AG04449 (cell line): ENCODE measurements at regions of chr1 and their contacts with region 1.

Region 1: GRCh38 chr1:145858894-145859490 is at the start of gene PIAS3:
- DNase-seq: peak; percentile 64
- H3K4me3 ChIP-seq: peak within 1 kb of the TSS; percentile 92
- CTCF ChIP-seq: no peak

Region 2: DNA sequence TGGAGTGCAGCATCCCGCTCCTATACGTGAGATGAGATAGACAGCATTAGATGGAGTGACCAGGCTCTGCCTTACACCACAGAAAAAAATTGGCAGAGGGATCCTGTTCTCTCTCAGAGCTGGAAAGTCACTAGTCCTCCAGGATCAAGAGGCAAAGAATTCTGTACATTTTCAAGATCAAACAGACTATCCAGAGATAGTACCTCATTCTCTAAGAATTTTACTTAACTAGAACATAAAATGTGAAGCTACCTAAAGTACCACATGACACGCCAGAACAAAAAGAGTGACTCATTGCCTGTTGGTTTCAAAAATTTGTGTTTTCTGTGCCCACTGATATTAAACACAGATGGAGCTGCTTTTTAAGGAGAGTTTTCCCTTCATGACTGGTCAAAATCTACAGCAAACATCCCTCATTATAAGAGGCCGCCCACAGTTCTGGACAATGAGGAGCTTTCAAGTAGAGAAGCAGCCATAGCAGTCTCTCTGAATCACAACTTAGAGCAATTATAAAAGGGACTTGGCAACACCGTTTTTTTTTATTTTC is 107.4 kb before region 1 on chr1:
- CTCF ChIA-PET with region 1: no interaction called
- POLR2A ChIA-PET with region 1: no interaction called
- DNase-seq: peak; percentile 84
- H3K4me3 ChIP-seq: no peak overlapping the region
- CTCF ChIP-seq: no peak

Region 3: DNA sequence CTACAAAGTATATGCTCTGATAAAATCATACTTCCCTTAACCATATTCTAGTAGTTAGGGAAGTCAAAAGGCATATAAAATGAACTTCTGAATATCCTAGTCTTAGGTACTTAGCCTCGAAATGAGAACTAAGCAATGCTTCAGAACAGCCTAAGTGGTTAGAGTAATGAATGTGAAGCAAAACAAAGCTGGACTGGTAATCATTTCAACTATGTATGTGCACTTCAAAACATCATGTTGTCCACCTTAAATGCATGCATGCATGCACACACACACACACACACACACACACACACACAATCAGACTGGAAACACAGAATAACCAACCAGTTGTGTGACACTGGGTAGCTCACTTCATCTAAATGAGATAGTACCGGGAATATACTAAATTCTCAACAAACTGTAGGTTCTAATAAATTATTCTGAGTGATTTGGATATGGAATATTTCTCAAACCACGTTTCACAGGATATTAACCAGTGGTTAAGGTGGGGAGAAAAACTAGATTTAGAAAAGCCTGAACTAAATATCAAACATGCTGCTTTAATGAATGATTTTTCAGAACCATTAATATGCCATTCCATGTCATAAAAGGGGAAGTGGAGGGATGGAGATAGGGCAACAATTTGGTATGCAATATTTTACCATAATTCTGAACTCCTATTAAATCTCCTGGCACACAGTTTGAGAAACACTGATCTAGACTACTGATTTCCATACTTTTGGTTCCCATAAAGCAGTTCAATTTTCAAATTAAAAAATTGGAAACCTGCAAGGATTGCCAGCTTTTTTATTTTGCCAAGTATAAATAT is 54.6 kb before region 1 on chr1:
- CTCF ChIA-PET with region 1: no interaction called
- POLR2A ChIA-PET with region 1: no interaction called
- DNase-seq: no peak
- H3K4me3 ChIP-seq: no peak overlapping the region
- CTCF ChIP-seq: no peak

Region 4: DNA sequence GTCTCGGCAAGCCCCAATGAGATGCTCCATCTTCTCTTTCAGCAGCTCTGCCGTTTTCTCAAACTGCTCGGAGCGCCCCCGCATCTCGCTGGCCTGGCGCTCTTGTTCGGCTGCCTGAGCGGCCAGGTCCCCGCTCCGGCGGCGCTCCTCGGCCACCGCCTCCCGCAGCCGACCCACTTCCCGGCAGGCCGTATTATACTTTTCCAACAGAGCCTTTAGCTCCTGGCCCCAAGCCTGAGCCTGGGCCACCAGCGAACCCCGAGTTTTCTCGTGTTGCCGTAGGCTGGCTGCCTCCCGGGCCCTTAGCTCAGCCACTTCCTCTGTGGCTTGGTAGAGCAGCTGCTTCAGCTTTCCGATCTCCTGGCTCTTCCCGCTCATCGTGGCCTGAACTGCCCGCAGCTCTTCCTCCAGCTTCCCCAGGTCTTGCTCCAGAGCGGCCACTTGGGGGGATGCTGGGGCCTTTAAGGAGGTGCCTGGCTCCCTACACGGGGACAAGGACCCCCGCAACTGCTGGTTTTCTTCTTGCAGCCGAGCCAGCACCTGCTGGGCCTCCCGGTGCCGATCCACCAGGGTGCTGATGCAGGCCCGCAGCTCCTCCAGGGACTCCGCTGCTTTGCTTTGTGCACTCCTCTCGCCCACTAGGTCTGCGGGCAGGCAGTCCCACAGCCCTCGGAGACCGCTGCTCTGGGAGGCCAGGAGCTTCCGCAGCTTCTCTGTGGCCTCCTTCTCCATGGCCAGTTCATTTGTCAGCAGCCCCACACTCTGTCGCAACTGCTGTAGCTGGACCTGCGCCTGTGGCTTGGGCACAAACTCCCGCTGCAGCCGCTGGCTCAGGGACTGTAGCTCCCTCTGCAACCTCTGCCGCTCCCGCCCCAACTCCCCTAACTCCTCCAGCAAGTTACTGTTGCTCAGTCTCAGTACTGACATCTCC is 13.3 kb after region 1 on chr1:
- CTCF ChIA-PET with region 1: interaction called, 16 read pairs
- POLR2A ChIA-PET with region 1: interaction called, 12 read pairs
- DNase-seq: no peak
- H3K4me3 ChIP-seq: peak overlapping the region; percentile 29
- CTCF ChIP-seq: no peak

Region 5: GRCh38 chr1:145885738-145886287 is 26.8 kb after region 1 on chr1 and contains the start of gene ANKRD35:
- CTCF ChIA-PET with region 1: interaction called, 46 read pairs
- POLR2A ChIA-PET with region 1: interaction called, 10 read pairs
- DNase-seq: no peak
- H3K4me3 ChIP-seq: peak within 1 kb of the TSS; percentile 74
- CTCF ChIP-seq: no peak

Region 6: DNA sequence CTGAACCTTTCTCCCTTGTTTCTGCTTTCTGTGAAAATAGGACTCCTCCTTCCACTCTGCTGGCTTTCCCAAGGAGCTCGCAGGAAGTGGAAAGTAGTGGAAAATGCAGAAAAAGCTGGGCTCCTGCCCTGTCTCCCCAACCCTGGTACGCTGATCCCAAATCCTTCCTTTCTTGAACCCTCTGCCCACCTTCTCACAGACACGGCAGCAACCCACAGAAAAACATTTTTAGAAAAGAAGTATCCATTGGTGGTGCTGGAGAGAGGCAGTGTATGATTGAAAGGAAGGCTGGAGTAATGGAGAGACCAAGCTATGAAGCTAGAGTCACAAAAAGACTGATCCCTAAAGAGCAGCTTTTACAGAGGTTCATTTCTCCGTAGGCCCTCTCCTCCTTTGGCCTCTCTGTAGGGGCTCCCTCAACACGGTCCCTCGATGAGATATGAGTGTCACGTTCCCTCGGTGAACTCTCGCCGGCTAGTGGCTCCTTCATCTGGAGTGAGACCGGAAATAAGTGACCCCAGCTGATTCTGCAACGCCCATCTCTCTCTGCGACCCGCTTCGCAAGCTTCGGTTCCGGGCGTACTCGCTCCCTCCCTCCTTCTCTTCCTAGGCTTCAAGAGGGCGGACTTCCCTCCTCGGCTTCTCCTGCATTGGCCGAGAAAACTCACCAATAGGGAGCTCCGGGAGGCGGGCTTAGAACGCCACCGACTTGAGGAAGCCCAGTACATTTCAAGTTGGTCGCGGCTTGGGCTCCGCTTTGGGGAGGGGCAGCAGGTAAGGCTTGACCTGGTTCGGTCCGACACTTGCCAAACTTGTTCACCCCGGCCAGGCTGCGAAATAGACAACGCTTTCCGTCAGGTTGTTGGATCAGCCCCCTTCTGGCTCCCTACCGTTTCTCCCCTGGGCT is 105.3 kb after region 1 on chr1 and contains the starts of genes ANKRD34A and POLR3GL:
- CTCF ChIA-PET with region 1: no interaction called
- POLR2A ChIA-PET with region 1: interaction called, 18 read pairs
- DNase-seq: no peak
- H3K4me3 ChIP-seq: peak within 1 kb of the TSS; percentile 93
- CTCF ChIP-seq: no peak